ENCODE measurements at regions of chr5 and their contacts with region 1.

Region 1: DNA sequence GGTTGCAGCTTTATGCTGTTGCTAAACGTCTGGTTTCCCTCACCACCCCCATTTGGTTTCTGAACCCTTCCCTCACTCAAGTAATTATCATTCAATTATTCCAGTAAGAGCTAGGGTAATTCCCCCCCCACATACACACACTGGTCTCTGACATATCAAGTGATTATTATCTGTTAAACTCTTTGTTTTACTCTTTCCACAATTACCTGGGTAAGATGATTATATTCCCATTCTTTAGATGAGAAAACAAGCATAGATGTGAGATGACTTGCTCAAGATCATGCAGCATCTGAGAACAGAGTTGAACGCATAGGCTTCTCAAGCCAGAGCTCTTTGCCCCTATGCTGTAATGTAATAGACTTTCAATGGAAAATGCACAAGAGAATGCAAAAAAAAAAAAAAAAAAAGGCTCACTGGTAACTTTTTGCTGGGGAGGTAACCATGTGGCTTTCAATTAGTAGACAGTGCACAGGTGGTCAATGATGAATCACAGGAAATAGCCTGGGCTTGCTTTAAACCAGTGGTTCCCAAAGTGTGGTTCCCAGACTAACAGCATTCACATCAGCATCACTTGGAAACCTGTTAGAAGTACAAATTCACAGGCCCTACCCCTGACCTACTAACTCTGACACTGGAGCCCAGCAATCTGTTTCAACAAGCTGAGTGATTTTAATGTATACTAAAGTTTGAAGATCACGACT is 87.6 kb downstream of the PIK3R1 start:
- DNase-seq: peak; percentile 55
- ATAC-seq: peak; percentile 73
- H3K4me3 ChIP-seq: no peak overlapping the region
- H3K27ac ChIP-seq: no peak overlapping the region
- H3K4me1 ChIP-seq: peaks cover 13% of the 10 kb centered on the region; the same call in 1 of the 2 replicates
- H3K27me3 ChIP-seq: no peaks in the 10 kb centered on the region
- CTCF ChIP-seq: no peak
- EP300 ChIP-seq: no peak
- POLR2A ChIP-seq: no peak
- RAD21 ChIP-seq: no peak

Region 2: GRCh38 chr5:68315679-68316271 is 12.6 kb after region 1 on chr5:
- CTCF ChIA-PET with region 1: interaction called, 3 read pairs
- POLR2A ChIA-PET with region 1: interaction called, 3 read pairs
- RAD21 ChIA-PET with region 1: interaction called, 4 read pairs
- SMC1A ChIA-PET with region 1: interaction called, 10 read pairs
- in situ Hi-C with region 1: no loop called
- intact Hi-C with region 1: no loop called
- DNase-seq: peak; percentile 55
- ATAC-seq: peak; percentile 100
- H3K4me3 ChIP-seq: no peak overlapping the region
- H3K27ac ChIP-seq: no peak overlapping the region
- H3K4me1 ChIP-seq: peaks cover 13% of the 10 kb centered on the region
- H3K27me3 ChIP-seq: no peaks in the 10 kb centered on the region
- CTCF ChIP-seq: no peak
- EP300 ChIP-seq: 0 out of 4 replicates have a peak, but pooled peaks of 1 of the 2 experiments have one; percentile 28
- POLR2A ChIP-seq: no peak
- RAD21 ChIP-seq: no peak

Measured in GM12878 (cell line).